ENCODE measurements at regions of chr1 and their contacts with region 1.

Region 1: DNA sequence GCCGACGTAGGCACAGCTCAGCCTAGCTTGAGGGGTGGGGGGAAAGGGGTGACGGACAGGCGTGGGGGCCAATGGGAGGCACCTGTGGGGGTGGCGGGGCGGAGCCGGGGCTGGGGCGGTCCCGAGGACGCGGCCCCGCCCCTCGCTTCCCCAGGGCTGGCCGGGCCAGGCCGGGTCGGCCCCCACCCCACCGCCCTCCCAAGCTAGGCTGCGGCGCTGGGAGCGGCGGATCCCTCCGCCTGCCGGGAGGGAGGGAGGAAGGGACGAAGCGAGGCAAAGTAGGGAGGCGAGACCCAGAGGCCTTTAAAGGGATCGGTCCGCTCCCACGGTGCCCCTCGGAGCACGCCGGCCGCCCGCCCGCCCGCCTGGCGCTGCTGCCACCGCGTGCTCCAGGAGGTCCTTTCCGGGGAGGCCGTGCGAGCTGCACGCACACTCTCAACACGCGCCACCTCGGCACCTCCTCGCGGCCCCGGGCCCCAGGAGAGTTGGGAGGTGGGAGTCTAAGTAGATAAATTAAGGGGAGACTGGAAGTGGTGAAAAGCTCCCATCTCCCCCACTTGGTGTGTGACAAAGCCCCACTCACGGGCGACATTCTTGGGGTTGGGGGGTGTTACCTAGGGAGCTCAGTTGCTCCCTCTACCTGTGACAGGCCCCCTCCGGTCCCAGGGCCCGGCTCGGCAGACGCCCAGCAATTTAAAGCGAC is 373 bp upstream of the MEF2D start:
- DNase-seq: peak; percentile 97
- ATAC-seq: peak; percentile 66
- H3K4me3 ChIP-seq: peak overlapping the region; percentile 51 to 99 (median 91)
- H3K4me3 Mint-ChIP-seq: peak overlapping the region; percentile 93
- H3K27ac ChIP-seq: peak overlapping the region; percentile 94 to 96
- H3K27ac Mint-ChIP-seq: peak overlapping the region; percentile 99
- H3K4me1 ChIP-seq: peaks cover 74 to 79% of the 10 kb centered on the region in 2 donors
- H3K4me1 Mint-ChIP-seq: peaks cover 78% of the 10 kb centered on the region
- H3K27me3 ChIP-seq: no peaks in the 10 kb centered on the region
- H3K27me3 Mint-ChIP-seq: no peaks in the 10 kb centered on the region
- CTCF ChIP-seq: peak; percentile 80

Region 2: DNA sequence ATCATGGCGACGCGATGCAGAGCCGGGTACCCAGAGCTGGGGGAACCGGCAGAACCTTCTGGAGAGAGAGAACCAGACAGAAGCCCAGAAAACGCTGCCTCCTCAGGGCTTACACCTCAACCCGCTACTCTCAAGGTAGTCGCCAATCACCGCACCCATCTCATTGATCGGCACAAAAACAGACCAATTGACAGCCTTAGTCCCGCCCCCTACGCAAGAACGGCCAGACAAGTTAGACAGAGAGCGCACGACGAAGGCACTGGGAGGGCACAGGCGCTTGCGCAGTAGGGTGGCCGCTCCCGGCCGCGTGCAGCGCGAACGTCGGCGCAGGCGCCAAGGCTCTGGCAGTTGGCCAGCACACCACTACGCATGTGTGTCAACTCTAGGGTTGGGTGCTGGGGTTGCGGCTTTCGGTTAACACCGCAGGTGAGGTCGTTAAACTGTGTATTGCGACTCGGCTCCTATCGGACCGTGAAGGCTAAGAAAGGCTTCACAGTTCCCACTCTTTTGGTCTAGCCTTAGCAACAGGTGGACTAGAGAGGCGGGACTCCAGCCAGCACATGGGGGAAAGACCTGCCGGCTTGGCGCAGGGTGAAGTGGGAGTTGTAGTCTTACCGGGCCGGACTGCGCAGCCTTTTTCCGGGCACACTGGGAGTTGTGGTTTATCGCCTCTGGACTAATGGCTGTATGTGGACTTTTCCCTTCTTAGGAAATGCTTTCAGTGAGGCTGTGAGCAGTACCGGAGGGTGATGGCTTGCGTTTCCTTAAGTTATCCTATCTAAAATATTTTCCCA is 162.6 kb before region 1 on chr1 and contains the starts of genes CCT3 and TSACC:
- CTCF ChIA-PET with region 1: no interaction called
- POLR2A ChIA-PET with region 1: no interaction called
- intact Hi-C with region 1: loop called (anchors 2 kb)
- DNase-seq: peak; percentile 100
- ATAC-seq: peak; percentile 94
- H3K4me3 ChIP-seq: peak within 1 kb of the TSS; percentile 82 to 98 (median 87)
- H3K4me3 Mint-ChIP-seq: peak within 1 kb of the TSS; percentile 97
- H3K27ac ChIP-seq: peak within 1 kb of the TSS; percentile 70 to 74
- H3K27ac Mint-ChIP-seq: peak within 1 kb of the TSS; percentile 96
- H3K4me1 ChIP-seq: peaks cover 13 to 19% of the 10 kb centered on the region in 2 donors
- H3K4me1 Mint-ChIP-seq: peaks cover 35% of the 10 kb centered on the region
- H3K27me3 ChIP-seq: no peaks in the 10 kb centered on the region
- H3K27me3 Mint-ChIP-seq: no peaks in the 10 kb centered on the region
- CTCF ChIP-seq: no peak
- total RNA-seq, gene CCT3: 106 and 109 TPM in 2 replicates
- total RNA-seq, gene TSACC: 0.69 TPM in 1 of 2 replicates, not detected in the other

Region 3: GRCh38 chr1:156489166-156489934 is 11.6 kb before region 1 on chr1:
- CTCF ChIA-PET with region 1: interaction called, 383 read pairs
- POLR2A ChIA-PET with region 1: interaction called, 193 read pairs
- intact Hi-C with region 1: loop called (anchors 1 kb)
- DNase-seq: peak; percentile 49
- ATAC-seq: no peak
- H3K4me3 ChIP-seq: peak overlapping the region in 2 of 5 experiments; percentile 7 to 30
- H3K4me3 Mint-ChIP-seq: peak overlapping the region; percentile 90
- H3K27ac ChIP-seq: peak overlapping the region; percentile 72 to 94
- H3K27ac Mint-ChIP-seq: peak overlapping the region; percentile 96
- H3K4me1 ChIP-seq: peaks cover 83 to 93% of the 10 kb centered on the region in 2 donors
- H3K4me1 Mint-ChIP-seq: peaks cover 91% of the 10 kb centered on the region
- H3K27me3 ChIP-seq: no peaks in the 10 kb centered on the region
- H3K27me3 Mint-ChIP-seq: no peaks in the 10 kb centered on the region
- CTCF ChIP-seq: no peak

Region 4: GRCh38 chr1:156583821-156584622 is 83.1 kb after region 1 on chr1:
- CTCF ChIA-PET with region 1: interaction called, 23 read pairs
- POLR2A ChIA-PET with region 1: interaction called, 19 read pairs
- intact Hi-C with region 1: loop called (anchors 1 kb)
- DNase-seq: peak; percentile 88
- ATAC-seq: peak; percentile 60
- H3K4me3 ChIP-seq: peak overlapping the region in 1 of 5 experiments; percentile 64
- H3K4me3 Mint-ChIP-seq: peak overlapping the region; percentile 15
- H3K27ac ChIP-seq: peak overlapping the region; percentile 88 to 94
- H3K27ac Mint-ChIP-seq: peak overlapping the region; percentile 76
- H3K4me1 ChIP-seq: peaks cover 26 to 36% of the 10 kb centered on the region in 2 donors
- H3K4me1 Mint-ChIP-seq: peaks cover 32% of the 10 kb centered on the region
- H3K27me3 ChIP-seq: no peaks in the 10 kb centered on the region
- H3K27me3 Mint-ChIP-seq: no peaks in the 10 kb centered on the region
- CTCF ChIP-seq: peak; percentile 94

Region 5: DNA sequence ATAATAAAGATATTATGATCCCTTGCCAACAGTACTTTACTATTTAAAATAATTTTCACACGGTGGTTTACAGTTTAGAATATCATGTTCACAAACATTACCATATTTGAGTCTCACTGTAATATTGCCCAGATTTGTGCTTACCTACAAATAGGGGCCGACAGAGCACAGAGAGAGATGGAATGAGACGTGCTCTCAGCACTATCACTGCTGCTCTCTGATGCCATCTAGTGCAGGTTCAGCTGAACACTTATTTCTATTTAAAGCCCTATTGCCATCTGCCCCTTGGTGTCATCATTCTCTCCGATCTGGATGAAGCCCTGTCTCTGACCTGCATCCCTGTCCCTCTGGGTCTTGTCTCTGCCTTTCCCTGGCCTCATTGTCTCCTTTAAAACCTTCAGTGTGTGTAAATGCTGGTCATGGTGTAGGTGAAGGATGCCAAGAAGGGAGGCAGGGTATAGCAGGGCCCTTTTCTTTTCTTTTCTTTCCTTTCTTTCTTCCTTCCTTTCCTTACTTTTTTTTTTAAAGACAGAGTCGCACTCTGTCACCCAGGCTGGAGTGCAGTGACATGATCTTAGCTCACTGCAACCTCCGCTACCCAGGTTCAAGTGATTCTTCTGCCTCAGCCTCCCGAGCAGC is 107.2 kb after region 1 on chr1:
- CTCF ChIA-PET with region 1: interaction called, 14 read pairs
- POLR2A ChIA-PET with region 1: interaction called, 7 read pairs
- intact Hi-C with region 1: loop called (anchors 2 kb)
- DNase-seq: peak; percentile 86
- ATAC-seq: peak; percentile 81
- H3K4me3 ChIP-seq: no peak overlapping the region
- H3K4me3 Mint-ChIP-seq: peak overlapping the region; percentile 71
- H3K27ac ChIP-seq: no peak overlapping the region
- H3K27ac Mint-ChIP-seq: peak overlapping the region; percentile 81
- H3K4me1 ChIP-seq: peaks cover 22 to 28% of the 10 kb centered on the region in 2 donors
- H3K4me1 Mint-ChIP-seq: peaks cover 26% of the 10 kb centered on the region
- H3K27me3 ChIP-seq: peaks cover 0 to 10% (median 3%) of the 10 kb centered on the region in 4 experiments
- H3K27me3 Mint-ChIP-seq: peaks cover 10% of the 10 kb centered on the region
- CTCF ChIP-seq: peak; percentile 80

Measured in B cell (primary cell).